IMR-90 (cell line): ENCODE measurements at regions of chr12 and their contacts with region 1.

Region 1: DNA sequence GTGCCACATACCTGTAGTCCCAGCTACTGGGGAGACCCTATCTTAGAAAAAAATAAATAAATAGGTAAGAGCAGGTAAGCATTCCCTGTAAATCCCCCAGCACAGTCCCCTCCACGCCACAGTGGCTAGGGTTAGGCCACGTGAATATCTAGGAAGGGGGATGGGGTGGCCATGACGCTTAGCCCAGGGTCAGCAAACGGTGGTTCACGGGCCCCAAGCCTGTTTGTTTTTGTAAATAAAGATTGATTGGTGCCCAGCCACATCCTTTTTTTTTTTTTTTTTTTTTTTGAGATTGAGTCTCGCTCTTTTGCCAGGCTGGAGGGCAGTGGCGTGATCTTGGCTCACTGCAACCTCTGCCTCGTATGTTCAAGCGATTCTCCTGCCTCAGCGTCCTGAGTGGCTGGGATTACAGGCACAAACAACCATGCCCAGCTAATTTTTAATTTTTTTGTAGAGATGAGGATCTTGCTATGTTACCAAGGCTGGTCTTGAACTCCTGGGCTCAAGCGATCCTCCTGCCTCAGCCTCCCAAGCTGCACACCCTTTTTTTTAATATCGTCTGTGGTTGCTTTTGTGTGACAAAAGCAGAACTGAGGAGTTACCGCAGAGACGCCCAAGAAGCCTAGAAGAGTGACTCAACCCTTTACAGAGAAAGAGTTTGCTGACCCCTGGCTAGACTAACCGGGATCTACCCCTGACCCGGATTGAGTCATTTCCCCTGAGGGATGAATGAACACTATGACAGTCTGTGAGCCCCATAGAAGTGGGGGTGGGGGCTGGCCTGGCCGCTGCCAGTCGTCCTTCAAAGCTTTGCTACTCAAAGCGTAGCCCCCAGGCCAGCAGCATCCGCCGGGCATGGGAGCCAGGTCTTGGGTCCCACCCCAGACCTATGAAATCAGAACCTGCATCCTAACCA is 113.7 kb upstream of the NCOR2 start:
- DNase-seq: peak; percentile 95
- ATAC-seq: peak; percentile 76
- H3K4me3 ChIP-seq: no peak overlapping the region
- H3K27ac ChIP-seq: peak overlapping the region; percentile 74
- H3K4me1 ChIP-seq: peaks cover 38% of the 10 kb centered on the region
- H3K27me3 ChIP-seq: no peaks in the 10 kb centered on the region
- CTCF ChIP-seq: peak; percentile 51; the same call in 1 of the 2 replicates
- POLR2A ChIP-seq: no peak
- RAD21 ChIP-seq: peak; percentile 53

Region 2: GRCh38 chr12:124130717-124131670 is 550.1 kb before region 1 on chr12:
- CTCF ChIA-PET with region 1: no interaction called
- POLR2A ChIA-PET with region 1: no interaction called
- dilution Hi-C with region 1: no loop called
- in situ Hi-C with region 1: no loop called
- intact Hi-C with region 1: no loop called
- DNase-seq: no peak
- ATAC-seq: no peak
- H3K4me3 ChIP-seq: no peak overlapping the region
- H3K27ac ChIP-seq: no peak overlapping the region
- H3K4me1 ChIP-seq: no peaks in the 10 kb centered on the region
- H3K27me3 ChIP-seq: peaks cover 17% of the 10 kb centered on the region
- CTCF ChIP-seq: no peak
- POLR2A ChIP-seq: no peak
- RAD21 ChIP-seq: no peak

Region 3: DNA sequence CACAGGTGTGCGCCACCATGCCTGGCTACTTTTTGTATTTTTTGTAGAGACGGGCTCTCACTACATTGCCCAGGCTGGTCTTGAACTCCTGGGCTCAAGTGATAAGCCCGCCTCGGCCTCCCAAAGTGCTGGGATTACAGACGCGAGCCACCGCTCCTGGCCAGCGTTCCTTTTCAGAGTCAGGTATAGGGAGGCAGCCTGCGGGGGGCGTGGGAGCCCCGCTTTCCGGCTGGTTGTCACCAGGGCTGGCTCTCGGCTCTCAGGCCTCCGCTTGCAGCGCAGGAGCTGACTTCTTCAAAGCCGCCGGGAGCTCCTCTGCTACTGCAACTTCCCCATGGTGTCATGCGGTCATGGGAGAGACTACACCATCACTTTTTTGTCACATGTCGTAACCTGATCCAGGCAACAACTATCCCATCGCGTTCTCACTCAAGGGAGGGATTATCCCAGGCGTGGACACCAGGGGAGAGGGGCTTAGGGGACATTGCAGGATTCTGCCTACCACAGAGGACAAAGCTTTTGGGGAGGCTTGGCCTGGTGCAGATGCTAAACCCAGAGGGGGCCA is 53.2 kb after region 1 on chr12:
- CTCF ChIA-PET with region 1: no interaction called
- POLR2A ChIA-PET with region 1: interaction called, 4 read pairs
- dilution Hi-C with region 1: loop called (anchors 10 kb)
- in situ Hi-C with region 1: no loop called
- intact Hi-C with region 1: no loop called
- DNase-seq: peak; percentile 54
- ATAC-seq: no peak
- H3K4me3 ChIP-seq: no peak overlapping the region
- H3K27ac ChIP-seq: no peak overlapping the region
- H3K4me1 ChIP-seq: peaks cover 20% of the 10 kb centered on the region
- H3K27me3 ChIP-seq: no peaks in the 10 kb centered on the region
- CTCF ChIP-seq: no peak
- POLR2A ChIP-seq: no peak
- RAD21 ChIP-seq: no peak